H1 (cell line): ENCODE measurements at regions of chr11 and their contacts with region 1.

Region 1: DNA sequence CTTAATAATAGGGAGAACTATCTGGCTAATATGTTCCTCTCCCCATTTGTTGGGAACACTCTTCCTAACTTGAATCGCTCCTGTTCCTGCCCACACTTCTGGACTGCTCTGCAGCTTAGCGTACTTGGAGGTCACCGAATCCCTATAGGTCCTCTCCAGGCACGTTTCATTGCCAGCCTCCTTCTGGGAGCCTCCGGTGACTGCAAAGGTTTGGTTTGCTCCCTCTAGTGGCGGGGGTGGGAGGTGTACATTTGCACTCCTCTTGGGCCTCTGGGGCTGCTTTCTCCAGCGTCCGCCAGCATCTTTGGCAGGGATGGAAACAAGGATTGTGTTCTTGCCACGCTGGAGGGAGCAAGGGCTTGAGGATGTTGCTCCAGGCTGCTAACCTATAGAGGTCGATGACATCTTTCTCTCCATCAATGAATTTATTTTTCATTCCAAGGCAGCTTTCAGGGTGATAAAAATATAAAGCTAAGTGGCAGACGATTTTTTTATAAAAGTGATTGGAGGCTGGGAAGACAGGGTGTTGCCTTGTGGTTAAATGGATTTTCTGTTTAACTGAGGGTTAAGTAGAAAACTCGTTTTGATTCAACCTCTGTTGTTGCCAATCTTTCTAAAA is 48.7 kb downstream of the TSPAN18 start:
- DNase-seq: peak in 1 of 2 experiments; percentile 86
- H3K4me3 ChIP-seq: no peak overlapping the region
- H3K27ac ChIP-seq: no peak overlapping the region
- H3K4me1 ChIP-seq: peaks cover 10 to 28% (median 13%) of the 10 kb centered on the region in 4 experiments
- H3K27me3 ChIP-seq: no peaks in the 10 kb centered on the region
- CTCF ChIP-seq: peak; percentile 91 to 95 (median 94)
- EP300 ChIP-seq: no peak
- POLR2A ChIP-seq: no peak
- RAD21 ChIP-seq: peak; percentile 71 to 85

Region 2: GRCh38 chr11:44627911-44628729 is 147.4 kb before region 1 on chr11:
- CTCF ChIA-PET with region 1: interaction called, 24 read pairs
- POLR2A ChIA-PET with region 1: no interaction called
- DNase-seq: no peak
- H3K4me3 ChIP-seq: no peak overlapping the region
- H3K27ac ChIP-seq: no peak overlapping the region
- H3K4me1 ChIP-seq: no peaks in the 10 kb centered on the region; a peak in 1 of 7 replicates
- H3K27me3 ChIP-seq: peaks cover 0 to 2% (median 1%) of the 10 kb centered on the region in 4 experiments; a peak in 1 of 7 replicates
- CTCF ChIP-seq: no peak
- EP300 ChIP-seq: no peak
- POLR2A ChIP-seq: no peak
- RAD21 ChIP-seq: no peak

Region 3: DNA sequence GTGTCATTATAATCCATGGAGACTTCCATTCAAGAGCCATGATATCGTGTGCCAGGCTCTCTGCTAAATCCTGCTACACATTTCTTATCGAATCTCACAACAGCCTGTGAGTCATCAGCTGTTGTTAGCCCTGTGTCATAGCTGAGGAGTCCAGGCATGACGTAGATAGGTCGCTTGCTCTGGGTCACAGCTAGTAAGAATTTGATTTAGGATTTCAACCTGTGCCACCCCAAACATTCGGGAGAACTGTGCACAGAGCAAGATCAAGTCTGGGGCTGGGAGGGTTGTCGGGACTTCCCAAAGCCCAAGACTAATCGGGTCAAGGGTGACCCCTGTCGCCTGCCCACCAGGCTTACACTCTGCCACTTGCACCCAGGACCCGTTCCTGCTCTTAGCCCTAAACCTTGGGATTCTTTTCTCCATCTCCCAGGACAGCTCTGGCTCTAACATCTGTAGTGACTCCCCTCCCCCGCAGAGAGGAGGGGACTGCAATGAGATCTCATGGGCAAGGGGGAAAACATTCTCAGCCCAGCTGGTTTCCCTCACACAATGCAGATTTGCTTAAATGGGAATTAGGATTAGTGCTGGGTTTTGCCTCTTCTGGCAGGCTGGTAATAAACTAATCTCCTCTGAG is 14.4 kb before region 1 on chr11:
- CTCF ChIA-PET with region 1: interaction called, 132 read pairs
- POLR2A ChIA-PET with region 1: interaction called, 7 read pairs
- DNase-seq: peak; percentile 61 to 68
- H3K4me3 ChIP-seq: no peak overlapping the region
- H3K27ac ChIP-seq: no peak overlapping the region
- H3K4me1 ChIP-seq: peaks cover 9 to 22% (median 14%) of the 10 kb centered on the region in 4 experiments
- H3K27me3 ChIP-seq: peaks cover 0 to 9% (median 6%) of the 10 kb centered on the region in 4 experiments; a peak in 5 of 7 replicates
- CTCF ChIP-seq: peak; percentile 75 to 86 (median 85)
- EP300 ChIP-seq: no peak
- POLR2A ChIP-seq: no peak
- RAD21 ChIP-seq: peak; percentile 88 to 90

Region 4: DNA sequence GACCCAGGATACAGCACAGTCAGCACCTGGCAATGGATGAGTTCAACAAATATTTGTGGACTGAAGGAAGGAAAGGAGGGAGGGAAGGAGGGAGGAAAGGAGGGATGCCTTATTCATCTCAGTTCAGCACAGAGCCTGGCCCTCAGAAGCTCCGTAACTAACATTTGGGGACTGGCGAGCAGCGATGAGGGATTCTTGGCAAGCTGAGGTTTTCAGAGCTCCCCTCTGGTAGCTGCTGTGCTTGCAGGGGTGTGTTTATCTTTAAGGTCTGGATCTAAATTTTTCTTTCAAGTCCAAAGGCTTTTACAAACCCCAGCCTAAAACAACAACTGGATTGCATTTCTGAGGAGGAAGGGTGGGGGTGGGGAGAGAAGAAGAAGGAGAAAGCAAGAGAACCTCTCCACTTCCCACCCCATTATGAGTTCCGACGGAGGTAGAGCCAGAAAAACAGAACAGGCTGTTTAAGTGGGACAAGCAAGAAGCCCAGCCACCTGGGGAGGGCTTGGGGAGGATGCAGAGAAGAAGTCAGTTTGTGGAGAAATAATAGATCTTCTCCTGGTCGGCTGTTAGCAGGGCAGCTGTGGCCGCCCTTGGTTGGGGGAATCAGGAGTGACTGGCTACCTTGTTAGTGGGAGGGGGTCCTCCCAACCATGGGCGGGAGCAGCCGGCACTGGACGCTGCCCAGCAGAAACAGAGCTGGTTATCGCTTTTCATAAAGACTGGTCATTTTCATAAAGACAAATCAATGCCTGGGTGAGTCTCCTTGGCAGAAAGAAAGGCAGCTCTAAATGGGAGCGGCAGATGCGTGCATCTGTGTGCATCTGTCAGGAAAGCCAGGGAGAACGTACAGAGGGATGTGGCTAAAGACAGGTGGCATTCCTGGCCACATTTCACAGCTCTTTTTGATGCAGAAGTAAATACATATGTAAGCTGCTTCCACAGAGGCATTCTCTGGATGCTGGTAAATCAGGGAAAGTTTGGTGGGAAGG is 29.3 kb after region 1 on chr11:
- CTCF ChIA-PET with region 1: interaction called, 38 read pairs
- POLR2A ChIA-PET with region 1: no interaction called
- DNase-seq: no peak
- H3K4me3 ChIP-seq: no peak overlapping the region
- H3K27ac ChIP-seq: no peak overlapping the region
- H3K4me1 ChIP-seq: peaks cover 0 to 17% (median 11%) of the 10 kb centered on the region in 4 experiments; a peak in 5 of 7 replicates
- H3K27me3 ChIP-seq: 0 out of 7 replicates have a peak, but pooled peaks cover 0 to 2% (median 0%) of the 10 kb centered on the region in 4 experiments
- CTCF ChIP-seq: no peak
- EP300 ChIP-seq: no peak
- POLR2A ChIP-seq: no peak
- RAD21 ChIP-seq: no peak

Region 5: DNA sequence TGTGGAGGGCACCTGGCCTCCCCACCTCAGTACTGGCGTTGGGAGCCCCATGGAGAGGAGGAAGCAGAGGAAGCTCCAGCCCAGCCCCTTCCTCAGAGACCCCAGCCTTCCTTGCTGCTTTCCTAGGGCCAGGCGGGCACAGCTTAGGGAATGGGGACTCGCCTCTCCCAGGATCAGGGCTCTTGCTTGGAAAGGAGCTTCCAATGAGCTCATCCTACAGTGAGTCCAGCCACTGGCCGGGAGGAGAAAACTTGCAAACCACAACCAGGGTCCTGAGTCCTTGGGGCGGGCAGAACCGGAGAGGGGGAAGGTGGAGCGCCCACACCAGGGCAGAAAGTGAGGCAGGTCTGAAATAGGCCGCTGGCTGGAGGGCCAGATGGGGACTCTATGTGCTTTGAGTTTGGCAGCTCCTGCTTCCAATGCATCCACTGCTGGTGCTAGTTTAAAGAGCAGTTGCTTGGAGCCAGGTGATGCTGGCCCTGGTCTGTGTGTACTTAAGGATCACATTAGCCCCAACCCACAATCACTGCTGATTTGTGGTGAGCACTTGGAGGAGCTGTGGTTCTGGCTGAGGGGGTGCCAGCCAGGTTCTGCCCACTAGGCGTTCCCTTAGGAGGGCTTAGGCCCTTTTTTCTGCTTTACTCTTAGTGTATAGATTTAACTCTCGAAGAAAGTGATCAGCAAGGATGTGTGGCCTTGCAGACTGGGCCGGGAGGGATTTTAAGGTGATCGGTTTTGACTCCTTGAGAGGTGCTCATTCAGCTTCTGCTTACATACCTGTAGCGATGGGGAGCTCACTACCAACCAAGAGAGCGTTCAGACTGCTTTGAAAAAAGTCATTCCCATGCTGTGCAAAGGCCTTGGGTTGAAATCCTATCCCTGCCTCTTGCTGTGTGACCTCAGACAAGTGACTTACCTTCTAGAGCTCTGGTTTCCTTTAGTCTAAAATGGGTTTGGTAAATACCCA is 93.3 kb after region 1 on chr11:
- CTCF ChIA-PET with region 1: interaction called, 18 read pairs
- POLR2A ChIA-PET with region 1: no interaction called
- DNase-seq: no peak
- H3K4me3 ChIP-seq: no peak overlapping the region
- H3K27ac ChIP-seq: no peak overlapping the region
- H3K4me1 ChIP-seq: peaks cover 0 to 15% (median 7%) of the 10 kb centered on the region in 4 experiments; a peak in 6 of 7 replicates
- H3K27me3 ChIP-seq: no peaks in the 10 kb centered on the region
- CTCF ChIP-seq: no peak
- EP300 ChIP-seq: no peak
- POLR2A ChIP-seq: no peak
- RAD21 ChIP-seq: no peak

Region 6: DNA sequence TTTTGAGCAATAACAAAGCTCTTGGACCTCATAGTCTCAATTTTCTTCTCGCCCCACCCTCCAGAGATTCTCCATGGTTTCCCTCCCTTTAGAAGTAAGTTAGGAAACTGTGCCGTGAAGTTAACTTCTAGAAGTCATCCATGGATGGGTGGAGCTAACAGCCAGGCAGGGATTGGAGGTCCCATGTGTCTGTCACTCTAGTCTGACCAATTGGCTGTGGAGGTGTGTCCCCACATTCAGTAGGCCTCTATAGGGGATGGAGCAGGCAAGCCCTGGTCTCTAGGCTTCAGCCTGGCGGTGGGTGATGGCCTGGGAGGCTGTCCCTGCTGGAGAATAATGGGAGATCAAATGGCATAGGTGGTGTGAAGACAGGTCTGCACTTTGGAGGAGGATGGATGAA is 124.5 kb after region 1 on chr11:
- CTCF ChIA-PET with region 1: interaction called, 87 read pairs
- POLR2A ChIA-PET with region 1: no interaction called
- DNase-seq: peak in 1 of 2 experiments; percentile 73
- H3K4me3 ChIP-seq: no peak overlapping the region
- H3K27ac ChIP-seq: no peak overlapping the region
- H3K4me1 ChIP-seq: peaks cover 0 to 4% (median 0%) of the 10 kb centered on the region in 4 experiments; a peak in 4 of 7 replicates
- H3K27me3 ChIP-seq: 0 out of 7 replicates have a peak, but pooled peaks cover 0 to 3% (median 0%) of the 10 kb centered on the region in 4 experiments
- CTCF ChIP-seq: no peak
- EP300 ChIP-seq: no peak
- POLR2A ChIP-seq: no peak
- RAD21 ChIP-seq: no peak; a peak in 1 of 4 replicates